B cell (primary cell): ENCODE measurements at regions of chr17 and their contacts with region 1.

Region 1: GRCh38 chr17:29116804-29117772 is 63.1 kb downstream of the MYO18A start:
- DNase-seq: peak; percentile 77
- ATAC-seq: peak; percentile 70
- H3K4me3 ChIP-seq: no peak overlapping the region
- H3K4me3 Mint-ChIP-seq: no peak overlapping the region
- H3K27ac ChIP-seq: no peak overlapping the region
- H3K27ac Mint-ChIP-seq: no peak overlapping the region
- H3K4me1 ChIP-seq: no peaks in the 10 kb centered on the region
- H3K4me1 Mint-ChIP-seq: peaks cover 5% of the 10 kb centered on the region
- H3K27me3 ChIP-seq: no peaks in the 10 kb centered on the region
- H3K27me3 Mint-ChIP-seq: no peaks in the 10 kb centered on the region
- CTCF ChIP-seq: peak; percentile 95

Region 2: DNA sequence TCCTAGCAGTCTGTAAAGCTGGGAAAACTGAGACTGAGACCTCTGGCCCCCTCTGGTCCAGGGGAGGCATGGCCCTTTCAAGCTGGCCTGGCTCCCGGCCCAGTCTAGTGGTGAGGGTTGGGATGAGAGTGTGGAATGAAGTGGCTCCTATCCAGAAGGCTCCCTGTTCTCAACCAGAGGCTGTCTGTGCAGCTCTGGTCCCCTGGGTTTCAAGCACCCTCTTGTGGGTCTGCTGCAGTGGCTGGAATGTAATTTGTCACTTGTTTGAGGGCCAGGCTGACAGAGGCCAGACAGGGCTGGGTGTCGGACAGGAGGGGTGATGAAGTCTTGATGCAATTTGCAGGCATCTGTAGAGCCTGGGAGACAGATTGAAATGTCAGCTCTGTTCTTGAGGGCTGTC is 143.7 kb before region 1 on chr17:
- CTCF ChIA-PET with region 1: interaction called, 21 read pairs
- POLR2A ChIA-PET with region 1: no interaction called
- intact Hi-C with region 1: no loop called
- DNase-seq: no peak
- ATAC-seq: no peak
- H3K4me3 ChIP-seq: no peak overlapping the region
- H3K4me3 Mint-ChIP-seq: no peak overlapping the region
- H3K27ac ChIP-seq: no peak overlapping the region
- H3K27ac Mint-ChIP-seq: no peak overlapping the region
- H3K4me1 ChIP-seq: no peaks in the 10 kb centered on the region
- H3K4me1 Mint-ChIP-seq: no peaks in the 10 kb centered on the region
- H3K27me3 ChIP-seq: peaks cover 0 to 7% (median 0%) of the 10 kb centered on the region in 4 experiments
- H3K27me3 Mint-ChIP-seq: peaks cover 10% of the 10 kb centered on the region
- CTCF ChIP-seq: no peak

Region 3: GRCh38 chr17:29102060-29102459 is 15.0 kb before region 1 on chr17:
- CTCF ChIA-PET with region 1: interaction called, 12 read pairs
- POLR2A ChIA-PET with region 1: no interaction called
- intact Hi-C with region 1: no loop called
- DNase-seq: no peak
- ATAC-seq: no peak
- H3K4me3 ChIP-seq: no peak overlapping the region
- H3K4me3 Mint-ChIP-seq: no peak overlapping the region
- H3K27ac ChIP-seq: no peak overlapping the region
- H3K27ac Mint-ChIP-seq: no peak overlapping the region
- H3K4me1 ChIP-seq: no peaks in the 10 kb centered on the region
- H3K4me1 Mint-ChIP-seq: no peaks in the 10 kb centered on the region
- H3K27me3 ChIP-seq: no peaks in the 10 kb centered on the region
- H3K27me3 Mint-ChIP-seq: no peaks in the 10 kb centered on the region
- CTCF ChIP-seq: no peak

Region 4: DNA sequence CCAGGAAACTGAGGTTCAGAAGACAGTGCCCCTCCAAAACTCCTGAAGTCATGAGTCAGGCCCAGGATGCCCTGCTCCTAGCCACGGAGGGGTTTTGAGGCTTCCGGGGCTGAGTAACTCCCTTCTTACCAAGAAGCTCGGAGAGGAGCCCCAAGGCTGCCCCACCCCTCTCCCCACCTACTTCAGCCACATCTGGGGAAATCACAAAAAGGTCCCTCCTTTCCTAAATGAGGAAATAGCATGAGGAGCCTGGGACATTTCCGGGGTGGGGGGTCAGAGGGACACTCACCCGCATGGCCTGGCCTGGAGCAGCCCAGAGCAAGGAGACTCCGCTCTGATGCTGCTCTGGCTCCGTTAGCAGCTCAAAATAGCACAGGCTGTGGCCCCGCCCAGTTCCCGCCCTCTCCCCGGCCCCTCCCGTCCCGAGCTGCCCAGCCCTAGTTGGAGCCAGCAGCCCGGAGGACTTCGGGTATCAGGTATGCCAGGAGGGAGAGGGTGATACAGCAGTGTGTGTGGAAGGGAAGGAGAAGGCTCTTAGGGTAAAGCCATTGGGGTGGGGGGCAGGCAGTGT is 23.0 kb after region 1 on chr17:
- CTCF ChIA-PET with region 1: interaction called, 25 read pairs
- POLR2A ChIA-PET with region 1: no interaction called
- intact Hi-C with region 1: no loop called
- DNase-seq: peak; percentile 66
- ATAC-seq: peak; percentile 60
- H3K4me3 ChIP-seq: peak overlapping the region; percentile 53 to 83 (median 75)
- H3K4me3 Mint-ChIP-seq: peak overlapping the region; percentile 91
- H3K27ac ChIP-seq: peak overlapping the region; percentile 42 to 81
- H3K27ac Mint-ChIP-seq: peak overlapping the region; percentile 98
- H3K4me1 ChIP-seq: peaks cover 42 to 60% of the 10 kb centered on the region in 2 donors
- H3K4me1 Mint-ChIP-seq: peaks cover 68% of the 10 kb centered on the region
- H3K27me3 ChIP-seq: no peaks in the 10 kb centered on the region
- H3K27me3 Mint-ChIP-seq: no peaks in the 10 kb centered on the region
- CTCF ChIP-seq: no peak